ENCODE measurements at regions of chr3 and their contacts with region 1.

Region 1: DNA sequence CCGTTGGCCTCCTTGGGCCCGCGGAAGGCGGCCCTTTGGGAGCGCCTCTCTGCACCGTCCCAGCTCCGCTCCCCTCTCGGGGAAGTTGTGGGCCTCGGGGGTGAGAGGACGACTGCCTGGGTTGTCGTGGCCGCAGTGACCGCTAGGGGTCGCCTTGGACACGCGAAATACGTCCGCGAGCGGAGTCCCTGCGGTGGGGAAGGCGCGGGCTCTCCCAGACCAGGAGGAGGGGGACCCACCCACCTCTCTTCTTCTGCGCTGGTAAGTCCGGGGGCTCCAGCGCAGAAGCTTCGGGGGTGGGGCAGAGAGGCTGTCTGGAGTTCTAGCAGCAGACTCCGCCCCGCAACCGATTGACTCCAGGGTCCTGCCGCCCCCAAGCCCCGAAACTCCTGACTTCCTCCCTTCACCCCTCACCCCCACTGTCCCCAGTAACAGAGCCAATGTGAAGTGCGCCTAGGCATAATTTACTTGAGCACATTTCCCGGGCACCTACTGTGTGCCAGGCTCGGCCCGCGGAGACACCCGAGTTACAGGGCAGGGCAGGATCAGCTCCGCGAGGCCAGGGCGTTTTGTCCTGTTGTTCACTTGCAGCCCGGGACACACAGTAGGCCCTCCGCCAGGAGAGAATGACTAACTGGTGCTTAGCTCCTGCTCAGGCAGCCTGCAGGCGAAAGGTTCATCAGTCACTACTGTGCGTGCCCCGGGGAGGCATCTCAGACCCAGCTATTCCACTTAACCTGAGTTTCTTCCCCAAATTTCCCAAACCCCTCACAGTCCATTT is 32.8 kb downstream of the DNASE1L3 start:
- DNase-seq: peak; percentile 90

Region 2: GRCh38 chr3:58167431-58168351 is 10.2 kb before region 1 on chr3:
- CTCF ChIA-PET with region 1: interaction called, 14 read pairs
- POLR2A ChIA-PET with region 1: interaction called, 3 read pairs
- DNase-seq: peak; percentile 82

Region 3: GRCh38 chr3:58188173-58188564 is 10.2 kb after region 1 on chr3:
- CTCF ChIA-PET with region 1: interaction called, 15 read pairs
- POLR2A ChIA-PET with region 1: no interaction called
- DNase-seq: no peak

Measured in HEK293T (cell line).